ENCODE measurements at regions of chr6 and their contacts with region 1.

Region 1: GRCh38 chr6:5764401-5764955 is 242.2 kb downstream of the NRN1 start:
- DNase-seq: peak; percentile 84 to 90
- H3K4me3 ChIP-seq: peak overlapping the region; percentile 28 to 39
- H3K27ac ChIP-seq: peak overlapping the region; percentile 85
- H3K4me1 ChIP-seq: peaks cover 5 to 56% (median 37%) of the 10 kb centered on the region in 4 donors
- H3K27me3 ChIP-seq: no peaks in the 10 kb centered on the region
- CTCF ChIP-seq: no peak

Region 2: DNA sequence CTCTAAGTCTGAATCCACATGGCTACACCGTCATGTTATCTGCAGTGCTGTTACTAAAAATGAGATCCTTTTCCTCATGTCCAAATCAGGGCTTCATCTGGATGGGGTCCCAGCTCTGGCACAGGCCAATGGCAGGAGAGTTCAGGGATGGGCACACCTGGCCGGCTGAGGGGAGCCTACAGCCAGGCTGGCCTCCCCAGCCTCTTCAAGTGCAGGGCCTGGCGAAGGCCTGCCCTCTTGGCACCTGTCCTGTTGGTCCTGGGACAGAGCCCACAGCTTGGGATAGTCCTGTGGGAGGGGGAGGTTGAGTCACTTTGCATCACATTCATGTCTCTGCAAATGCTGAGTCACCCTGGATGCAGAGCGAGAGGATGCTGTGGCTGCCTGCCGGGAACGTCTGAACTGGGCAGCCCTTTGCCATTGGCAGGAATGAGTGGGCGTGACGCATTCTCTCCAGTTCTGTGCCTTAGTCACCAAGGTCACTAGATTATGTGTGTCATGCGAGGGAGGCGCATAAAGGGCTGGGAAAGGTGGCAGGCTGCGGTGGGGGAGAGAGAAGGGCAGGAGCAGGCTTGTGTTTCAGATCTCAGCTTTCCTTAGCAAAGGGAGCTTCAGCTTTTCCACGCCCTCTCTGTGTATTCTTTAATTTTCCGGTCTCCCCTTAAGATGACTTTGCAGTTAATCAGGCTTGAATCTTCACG is 1405.9 kb before region 1 on chr6:
- intact Hi-C with region 1: loop called (anchors 10 kb)
- DNase-seq: peak; percentile 95 to 99
- H3K4me3 ChIP-seq: peak overlapping the region in 1 of 2 donors; percentile 19
- H3K27ac ChIP-seq: peak overlapping the region; percentile 88 to 89
- H3K4me1 ChIP-seq: peaks cover 3 to 22% (median 12%) of the 10 kb centered on the region in 4 donors
- H3K27me3 ChIP-seq: no peaks in the 10 kb centered on the region
- CTCF ChIP-seq: no peak

Region 3: DNA sequence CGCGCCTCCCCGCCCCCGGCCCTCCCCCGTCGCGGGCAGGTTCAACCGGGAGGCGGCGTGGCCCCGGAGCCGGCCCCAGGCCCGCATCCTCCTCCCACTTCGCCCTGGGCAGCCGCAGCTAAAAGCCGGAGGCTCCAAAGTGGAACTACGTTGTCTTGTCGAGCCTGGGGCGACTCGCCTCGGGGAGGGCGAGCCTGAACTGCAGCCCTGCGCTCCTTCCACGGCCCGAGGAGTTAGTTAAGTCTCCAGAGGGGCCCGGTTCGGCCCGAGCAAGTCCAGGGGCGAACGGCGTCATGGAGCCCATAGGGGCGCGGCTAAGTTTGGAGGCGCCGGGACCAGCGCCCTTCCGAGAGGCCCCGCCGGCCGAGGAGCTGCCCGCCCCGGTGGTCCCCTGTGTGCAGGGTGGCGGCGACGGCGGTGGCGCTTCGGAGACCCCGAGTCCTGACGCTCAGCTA is 679.3 kb before region 1 on chr6 and contains the start of gene PPP1R3G:
- intact Hi-C with region 1: loop called (anchors 10 kb)
- DNase-seq: peak; percentile 51 to 79
- H3K4me3 ChIP-seq: peak within 1 kb of the TSS; percentile 65 to 85
- H3K27ac ChIP-seq: peak within 1 kb of the TSS; percentile 86 to 91
- H3K4me1 ChIP-seq: peaks cover 0 to 15% (median 11%) of the 10 kb centered on the region in 4 donors
- H3K27me3 ChIP-seq: no peaks in the 10 kb centered on the region
- CTCF ChIP-seq: no peak

Region 4: GRCh38 chr6:5205877-5206850 is 558.3 kb before region 1 on chr6:
- intact Hi-C with region 1: loop called (anchors 10 kb)
- DNase-seq: peak; percentile 67 to 82
- H3K4me3 ChIP-seq: no peak overlapping the region
- H3K27ac ChIP-seq: peak overlapping the region; percentile 52 to 72
- H3K4me1 ChIP-seq: peaks cover 0 to 65% (median 43%) of the 10 kb centered on the region in 4 donors
- H3K27me3 ChIP-seq: no peaks in the 10 kb centered on the region
- CTCF ChIP-seq: no peak

Region 5: GRCh38 chr6:6008648-6009421 is 244.4 kb after region 1 on chr6:
- intact Hi-C with region 1: loop called (anchors 5 kb)
- DNase-seq: peak; percentile 73 to 93
- H3K4me3 ChIP-seq: peak overlapping the region; percentile 56 to 69
- H3K27ac ChIP-seq: peak overlapping the region; percentile 86 to 90
- H3K4me1 ChIP-seq: peaks cover 0 to 54% (median 36%) of the 10 kb centered on the region in 4 donors
- H3K27me3 ChIP-seq: peaks cover 4 to 64% of the 10 kb centered on the region in 2 donors
- CTCF ChIP-seq: no peak